ENCODE measurements at regions of chr19 and their contacts with region 1.

Region 1: GRCh38 chr19:984165-984967 is at the start of gene WDR18:
- DNase-seq: peak; percentile 79
- ATAC-seq: peak; percentile 58
- H3K4me3 ChIP-seq: peak within 1 kb of the TSS; percentile 86 to 98 (median 95)
- H3K27ac ChIP-seq: peak within 1 kb of the TSS; percentile 85
- H3K4me1 ChIP-seq: peaks cover 44% of the 10 kb centered on the region
- H3K27me3 ChIP-seq: no peaks in the 10 kb centered on the region
- CTCF ChIP-seq: peak; percentile 37
- EP300 ChIP-seq: no peak
- POLR2A ChIP-seq: peak; percentile 69 to 77; a peak in 3 of 4 replicates
- RAD21 ChIP-seq: peak; percentile 58
- total RNA-seq, gene WDR18: 47.6 and 49.7 TPM in 2 replicates

Region 2: GRCh38 chr19:860481-861101 is 123.8 kb before region 1 on chr19:
- CTCF ChIA-PET with region 1: no interaction called
- POLR2A ChIA-PET with region 1: interaction called, 3 read pairs
- in situ Hi-C with region 1: loop called (anchors 10 kb)
- intact Hi-C with region 1: no loop called
- DNase-seq: peak; percentile 53
- ATAC-seq: peak; percentile 75
- H3K4me3 ChIP-seq: peak overlapping the region; percentile 30 to 67 (median 60); a peak in 5 of 6 replicates
- H3K27ac ChIP-seq: no peak overlapping the region
- H3K4me1 ChIP-seq: peaks cover 19% of the 10 kb centered on the region
- H3K27me3 ChIP-seq: no peaks in the 10 kb centered on the region; a peak in 1 of 5 replicates
- CTCF ChIP-seq: peak; percentile 69
- EP300 ChIP-seq: no peak
- POLR2A ChIP-seq: peak; percentile 29 to 61; a peak in 1 of 4 replicates
- RAD21 ChIP-seq: peak; percentile 36; the same call in 1 of the 2 replicates

Region 3: DNA sequence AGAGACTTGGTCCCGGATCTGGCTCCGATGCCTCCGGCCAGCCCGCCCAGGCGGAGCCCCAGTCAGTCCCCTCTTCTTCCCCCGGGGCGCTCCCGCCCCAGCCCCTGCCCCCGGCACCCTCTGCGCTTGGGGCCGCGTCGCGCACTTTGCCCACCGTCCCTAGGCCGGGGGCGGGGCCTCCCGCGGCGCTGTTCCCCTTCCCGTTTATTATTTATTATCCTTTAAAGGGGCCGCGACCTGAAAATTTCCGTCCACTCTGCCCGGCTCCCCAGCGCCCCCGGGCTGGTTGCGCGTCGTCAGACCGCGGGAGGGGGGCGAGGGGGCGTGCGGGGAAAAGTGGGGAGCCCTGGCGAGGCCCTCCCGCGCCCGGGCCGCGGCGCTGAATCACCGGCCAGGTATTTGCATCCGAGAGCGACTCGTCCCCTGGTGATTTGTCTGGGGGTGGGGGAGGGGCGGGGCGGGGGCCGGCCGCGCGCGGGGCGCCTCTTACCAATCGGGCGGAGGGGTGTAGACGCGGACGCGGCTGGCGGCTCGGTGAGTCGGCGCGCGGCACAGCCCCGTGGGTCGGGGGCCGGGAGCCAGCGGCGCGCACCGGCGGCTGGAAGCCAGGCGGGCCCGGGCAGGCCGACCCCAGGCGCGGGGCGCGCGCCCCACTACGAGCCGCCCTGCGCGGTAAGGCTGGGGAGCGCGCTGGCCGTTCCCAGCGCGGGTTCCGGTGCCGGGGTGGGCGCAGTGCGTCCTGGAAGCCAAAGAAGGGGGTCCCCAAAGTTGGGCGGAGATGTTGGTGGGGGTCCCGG is 58.6 kb before region 1 on chr19 and contains the start of gene ARID3A:
- CTCF ChIA-PET with region 1: interaction called, 78 read pairs
- POLR2A ChIA-PET with region 1: interaction called, 61 read pairs
- in situ Hi-C with region 1: loop called (anchors 5 kb)
- intact Hi-C with region 1: loop called (anchors 1 kb)
- DNase-seq: peak; percentile 82
- ATAC-seq: peak; percentile 63
- H3K4me3 ChIP-seq: peak within 1 kb of the TSS; percentile 88 to 98 (median 96)
- H3K27ac ChIP-seq: peak within 1 kb of the TSS; percentile 92
- H3K4me1 ChIP-seq: peaks cover 45% of the 10 kb centered on the region
- H3K27me3 ChIP-seq: no peaks in the 10 kb centered on the region
- CTCF ChIP-seq: no peak
- EP300 ChIP-seq: peak in 1 of 2 experiments; percentile 32; a peak in 2 of 4 replicates
- POLR2A ChIP-seq: peak in 1 of 2 experiments; percentile 52; a peak in 3 of 4 replicates
- RAD21 ChIP-seq: no peak; the same call in 1 of the 2 replicates
- total RNA-seq, gene ARID3A: 53.8 and 71.3 TPM in 2 replicates

Region 4: GRCh38 chr19:958967-959820 is 25.2 kb before region 1 on chr19:
- CTCF ChIA-PET with region 1: no interaction called
- POLR2A ChIA-PET with region 1: interaction called, 14 read pairs
- in situ Hi-C with region 1: no loop called
- intact Hi-C with region 1: no loop called
- DNase-seq: peak; percentile 59
- ATAC-seq: peak; percentile 3; the same call in 1 of the 3 replicates
- H3K4me3 ChIP-seq: peak overlapping the region in 1 of 3 experiments; percentile 30; a peak in 1 of 6 replicates
- H3K27ac ChIP-seq: peak overlapping the region; percentile 74
- H3K4me1 ChIP-seq: peaks cover 86% of the 10 kb centered on the region
- H3K27me3 ChIP-seq: no peaks in the 10 kb centered on the region
- CTCF ChIP-seq: no peak
- EP300 ChIP-seq: no peak
- POLR2A ChIP-seq: peak in 1 of 2 experiments; percentile 48; a peak in 1 of 4 replicates
- RAD21 ChIP-seq: no peak

Region 5: DNA sequence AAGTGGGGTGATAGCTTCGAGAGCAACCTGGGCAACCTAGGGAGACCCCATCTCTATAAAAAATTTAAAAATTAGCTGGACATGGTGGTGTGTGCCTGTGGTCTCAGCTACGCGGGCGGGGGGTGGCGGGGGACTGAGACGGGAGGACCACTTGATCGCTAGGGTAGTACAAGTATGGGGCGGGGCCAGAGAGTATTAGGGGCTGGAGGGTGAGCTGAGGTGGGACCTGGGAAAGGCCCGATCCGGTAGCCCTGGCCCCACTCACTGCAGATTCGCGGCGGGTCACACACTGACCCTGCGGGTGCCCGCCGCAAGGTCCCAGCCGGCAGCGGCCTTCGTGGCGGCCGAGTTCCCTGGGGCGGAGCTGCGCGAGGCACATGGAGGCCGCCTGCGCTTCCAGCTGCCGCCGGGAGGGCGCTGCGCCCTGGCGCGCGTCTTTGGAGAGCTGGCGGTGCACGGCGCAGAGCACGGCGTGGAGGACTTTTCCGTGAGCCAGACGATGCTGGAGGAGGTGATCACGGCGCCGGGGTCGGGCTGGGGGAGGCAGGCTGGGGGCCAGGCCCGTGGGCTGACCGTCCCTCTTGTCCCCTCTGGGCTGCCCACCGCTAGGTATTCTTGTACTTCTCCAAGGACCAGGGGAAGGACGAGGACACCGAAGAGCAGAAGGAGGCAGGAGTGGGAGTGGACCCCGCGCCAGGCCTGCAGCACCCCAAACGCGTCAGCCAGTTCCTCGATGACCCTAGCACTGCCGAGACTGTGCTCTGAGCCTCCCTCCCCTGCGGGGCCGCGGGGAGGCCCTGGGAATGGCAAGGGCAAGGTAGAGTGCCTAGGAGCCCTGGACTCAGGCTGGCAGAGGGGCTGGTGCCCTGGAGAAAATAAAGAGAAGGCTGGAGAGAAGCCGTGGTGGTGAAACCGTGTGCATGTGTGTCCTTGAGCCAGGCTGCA is 80.6 kb after region 1 on chr19:
- CTCF ChIA-PET with region 1: no interaction called
- POLR2A ChIA-PET with region 1: no interaction called
- in situ Hi-C with region 1: no loop called
- intact Hi-C with region 1: no loop called
- DNase-seq: no peak
- ATAC-seq: peak; percentile 53
- H3K4me3 ChIP-seq: peak overlapping the region in 2 of 3 experiments; percentile 33 to 78; a peak in 4 of 6 replicates
- H3K27ac ChIP-seq: peak overlapping the region; percentile 6
- H3K4me1 ChIP-seq: peaks cover 37% of the 10 kb centered on the region
- H3K27me3 ChIP-seq: no peaks in the 10 kb centered on the region
- CTCF ChIP-seq: peak; percentile 77
- EP300 ChIP-seq: no peak
- POLR2A ChIP-seq: no peak
- RAD21 ChIP-seq: peak; percentile 57

Region 6: GRCh38 chr19:1076951-1077350 is 92.6 kb after region 1 on chr19:
- CTCF ChIA-PET with region 1: no interaction called
- POLR2A ChIA-PET with region 1: no interaction called
- in situ Hi-C with region 1: no loop called
- intact Hi-C with region 1: no loop called
- DNase-seq: no peak
- ATAC-seq: no peak
- H3K4me3 ChIP-seq: no peak overlapping the region
- H3K27ac ChIP-seq: no peak overlapping the region
- H3K4me1 ChIP-seq: peaks cover 38% of the 10 kb centered on the region
- H3K27me3 ChIP-seq: no peaks in the 10 kb centered on the region
- CTCF ChIP-seq: no peak
- EP300 ChIP-seq: no peak
- POLR2A ChIP-seq: no peak
- RAD21 ChIP-seq: no peak

Measured in HepG2 (cell line).